Breast epithelium (tissue), 4 donors: ENCODE measurements at regions of chr7 and their contacts with region 1.

Region 1: DNA sequence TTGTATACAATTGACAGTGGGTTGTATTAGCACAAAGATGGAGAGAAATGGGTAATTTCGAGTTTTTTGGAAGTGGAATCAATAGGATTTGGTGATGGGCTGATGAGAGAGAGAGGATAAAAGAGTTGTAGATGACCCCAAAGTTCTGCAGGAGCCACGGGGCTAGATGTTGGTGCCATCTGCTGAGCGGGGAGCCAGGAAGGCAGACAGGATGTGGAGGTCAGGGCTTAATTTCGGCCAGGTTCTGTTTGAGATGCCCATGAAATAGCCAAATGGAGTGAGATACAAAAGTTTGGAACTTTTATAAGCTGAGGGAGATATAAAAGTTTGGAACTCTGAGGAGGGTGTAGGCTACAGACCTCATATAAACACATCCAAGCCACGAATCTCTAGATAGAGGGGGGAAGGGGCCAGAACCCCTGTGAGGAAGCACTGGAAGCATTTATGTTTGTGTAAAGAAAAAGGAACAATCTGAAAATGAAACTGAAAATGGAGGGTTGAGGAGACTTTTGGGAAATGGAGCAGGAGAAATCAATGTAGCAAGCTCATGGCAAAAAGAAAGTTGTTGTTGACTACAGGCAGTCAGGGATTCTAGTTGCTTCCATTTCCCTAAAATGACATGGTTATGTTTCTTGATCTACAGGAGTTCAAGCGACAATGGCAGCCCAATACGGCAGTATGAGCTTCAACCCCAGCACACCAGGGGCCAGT is 2.2 kb downstream of the GIMAP4 start:
- DNase-seq: no peak
- H3K4me3 ChIP-seq: peak overlapping the region; percentile 40 to 63 (median 44)
- H3K27ac ChIP-seq: peak overlapping the region in 1 of 2 donors; percentile 61
- H3K4me1 ChIP-seq: no peaks in the 10 kb centered on the region
- H3K27me3 ChIP-seq: no peaks in the 10 kb centered on the region
- CTCF ChIP-seq: no peak
- POLR2A ChIP-seq: no peak

Region 2: GRCh38 chr7:148800677-148801076 is 1768.7 kb before region 1 on chr7:
- intact Hi-C with region 1: no loop called
- DNase-seq: no peak
- H3K4me3 ChIP-seq: no peak overlapping the region
- H3K27ac ChIP-seq: no peak overlapping the region
- H3K4me1 ChIP-seq: no peaks in the 10 kb centered on the region
- H3K27me3 ChIP-seq: no peaks in the 10 kb centered on the region
- CTCF ChIP-seq: no peak
- POLR2A ChIP-seq: no peak

Region 3: DNA sequence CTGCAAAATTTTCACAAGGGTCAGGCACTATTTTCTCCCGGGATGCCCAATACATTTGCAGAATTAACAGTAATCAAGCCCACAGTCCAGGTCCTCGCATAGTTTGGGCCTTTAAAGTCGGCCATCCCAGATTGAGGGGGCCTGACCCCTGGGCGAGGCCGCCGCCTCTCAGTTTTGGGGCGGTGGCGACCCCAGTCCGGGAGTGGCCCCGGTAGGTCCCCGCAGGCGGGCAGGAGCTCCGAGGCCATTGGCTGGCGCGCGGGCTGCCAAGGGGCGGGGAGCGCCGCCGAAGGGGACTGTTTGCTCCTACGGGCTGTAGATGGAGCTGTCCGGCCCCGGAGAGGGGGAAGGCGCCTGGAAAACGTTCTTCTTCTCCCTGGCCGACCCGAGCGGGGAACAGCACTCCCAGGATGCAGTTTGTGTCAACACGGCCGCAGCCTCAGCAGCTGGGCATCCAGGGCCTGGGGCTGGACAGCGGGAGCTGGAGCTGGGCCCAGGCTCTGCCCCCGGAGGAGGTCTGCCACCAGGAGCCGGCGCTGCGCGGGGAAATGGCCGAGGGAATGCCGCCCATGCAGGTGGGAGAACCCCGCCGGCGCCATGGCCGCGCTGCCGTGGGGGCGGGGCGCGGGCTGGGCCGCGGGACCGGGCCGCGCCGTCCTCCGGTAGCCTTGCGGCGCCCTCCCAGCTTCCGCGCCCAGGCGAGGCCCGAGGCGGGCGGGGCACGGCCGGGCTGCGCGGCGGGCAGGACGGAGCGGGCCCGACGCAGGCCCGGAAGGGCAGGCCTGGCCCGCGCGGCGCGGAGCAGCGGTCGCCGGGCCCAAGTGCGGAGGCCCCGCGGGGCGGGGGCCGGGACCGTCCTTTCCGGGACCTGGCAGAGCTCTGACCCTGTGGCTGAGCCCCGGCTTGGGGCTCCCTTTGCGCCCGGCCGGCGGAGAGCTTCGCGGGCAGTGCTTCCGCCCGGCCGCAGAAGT is 1373.9 kb before region 1 on chr7 and contains the start of gene ZNF282:
- intact Hi-C with region 1: no loop called
- DNase-seq: peak; percentile 84 to 93
- H3K4me3 ChIP-seq: peak within 1 kb of the TSS; percentile 73 to 83 (median 74)
- H3K27ac ChIP-seq: peak within 1 kb of the TSS; percentile 83 to 93
- H3K4me1 ChIP-seq: peaks cover 6 to 9% of the 10 kb centered on the region in 2 donors
- H3K27me3 ChIP-seq: no peaks in the 10 kb centered on the region
- CTCF ChIP-seq: peak in 2 of 3 donors; percentile 52 to 55
- POLR2A ChIP-seq: no peak
- total RNA-seq, gene ZNF282: 13.0 to 19.2 (median 17.4) TPM

Region 4: DNA sequence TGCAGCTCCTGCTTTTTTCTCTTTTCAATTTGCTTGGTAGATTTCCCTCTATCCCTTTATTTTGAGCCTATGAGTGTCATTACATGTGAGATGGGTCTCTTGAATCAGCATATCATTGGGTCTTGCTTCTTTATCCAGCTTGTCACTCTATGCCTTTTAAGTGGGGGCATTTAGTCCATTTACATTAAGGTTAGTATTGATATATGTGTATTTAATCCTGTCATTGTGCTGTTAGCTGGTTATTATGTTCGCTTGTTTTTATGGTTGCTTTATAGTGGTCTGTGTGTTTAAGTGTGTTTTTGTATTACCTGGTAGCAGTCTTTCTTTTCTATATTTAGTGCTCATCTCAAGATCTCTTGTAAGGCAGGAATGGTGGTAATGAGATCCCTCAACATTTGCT is 37.7 kb before region 1 on chr7:
- intact Hi-C with region 1: loop called (anchors 2 kb)
- DNase-seq: no peak
- H3K4me3 ChIP-seq: no peak overlapping the region
- H3K27ac ChIP-seq: no peak overlapping the region
- H3K4me1 ChIP-seq: no peaks in the 10 kb centered on the region
- H3K27me3 ChIP-seq: no peaks in the 10 kb centered on the region
- CTCF ChIP-seq: no peak
- POLR2A ChIP-seq: no peak

Region 5: DNA sequence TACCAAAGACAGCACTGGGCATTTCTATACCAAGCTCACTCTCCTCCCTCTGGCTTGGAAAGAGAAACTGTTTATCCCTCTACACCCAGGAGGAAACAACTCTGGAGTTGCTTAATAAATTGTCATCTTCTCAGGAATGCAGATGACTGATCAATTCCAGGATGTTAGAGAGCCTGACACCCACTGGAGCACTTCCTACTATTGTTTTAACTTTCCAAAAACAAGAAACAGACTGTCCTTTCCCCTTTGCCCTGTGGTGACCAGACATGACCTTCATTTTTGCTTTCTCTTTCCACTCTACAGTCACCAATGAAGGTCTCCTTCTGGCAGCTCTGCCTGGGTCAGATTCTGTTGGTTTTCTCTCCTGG is 17.4 kb after region 1 on chr7:
- intact Hi-C with region 1: loop called (anchors 1 kb)
- DNase-seq: no peak
- H3K4me3 ChIP-seq: no peak overlapping the region
- H3K27ac ChIP-seq: peak overlapping the region; percentile 59 to 75
- H3K4me1 ChIP-seq: no peaks in the 10 kb centered on the region
- H3K27me3 ChIP-seq: no peaks in the 10 kb centered on the region
- CTCF ChIP-seq: no peak
- POLR2A ChIP-seq: no peak